ENCODE measurements at regions of chr11 and their contacts with region 1.

Region 1: GRCh38 chr11:18634140-18635032 is at the start of gene SPTY2D1:
- DNase-seq: peak; percentile 100
- H3K4me3 ChIP-seq: peak within 1 kb of the TSS; percentile 76 to 91 (median 84)
- H3K27ac ChIP-seq: peak within 1 kb of the TSS; percentile 90 to 95 (median 93)
- H3K4me1 ChIP-seq: peaks cover 10 to 44% (median 35%) of the 10 kb centered on the region in 4 donors
- H3K27me3 ChIP-seq: no peaks in the 10 kb centered on the region
- CTCF ChIP-seq: peak in 2 of 3 experiments; percentile 10 to 13
- EP300 ChIP-seq: no peak
- POLR2A ChIP-seq: peak; percentile 82
- total RNA-seq, gene SPTY2D1: 9.6 to 32.1 (median 18.1) TPM

Region 2: GRCh38 chr11:18304745-18305144 is 329.6 kb before region 1 on chr11:
- intact Hi-C with region 1: no loop called
- DNase-seq: no peak
- H3K4me3 ChIP-seq: no peak overlapping the region
- H3K27ac ChIP-seq: no peak overlapping the region
- H3K4me1 ChIP-seq: no peaks in the 10 kb centered on the region
- H3K27me3 ChIP-seq: no peaks in the 10 kb centered on the region
- CTCF ChIP-seq: no peak
- EP300 ChIP-seq: no peak
- POLR2A ChIP-seq: no peak

Region 3: DNA sequence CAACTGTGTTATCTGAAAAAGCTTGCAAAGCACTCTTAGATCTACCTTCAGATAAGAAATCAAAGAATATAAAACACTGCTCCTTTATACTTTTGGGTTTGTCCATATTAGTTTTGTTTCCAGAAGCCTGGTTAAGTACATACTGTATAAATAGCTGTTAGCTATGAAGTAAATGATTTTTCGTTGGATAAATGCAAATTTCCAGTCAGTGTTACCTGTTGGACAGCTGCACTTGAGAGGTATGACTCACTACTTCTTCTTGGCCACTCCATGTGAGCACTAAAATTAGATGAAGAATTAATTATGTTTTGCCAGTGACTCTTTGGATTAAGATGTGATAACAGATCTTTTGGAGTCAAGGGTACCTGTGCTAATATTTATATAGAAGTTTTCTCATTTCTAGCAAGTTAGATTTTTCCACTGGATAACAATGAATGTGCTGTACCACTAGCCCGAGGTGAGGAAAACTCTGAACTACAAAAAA is 98.2 kb before region 1 on chr11:
- intact Hi-C with region 1: loop called (anchors 10 kb)
- DNase-seq: no peak
- H3K4me3 ChIP-seq: no peak overlapping the region
- H3K27ac ChIP-seq: no peak overlapping the region
- H3K4me1 ChIP-seq: no peaks in the 10 kb centered on the region
- H3K27me3 ChIP-seq: no peaks in the 10 kb centered on the region
- CTCF ChIP-seq: no peak
- EP300 ChIP-seq: no peak
- POLR2A ChIP-seq: no peak

Region 4: DNA sequence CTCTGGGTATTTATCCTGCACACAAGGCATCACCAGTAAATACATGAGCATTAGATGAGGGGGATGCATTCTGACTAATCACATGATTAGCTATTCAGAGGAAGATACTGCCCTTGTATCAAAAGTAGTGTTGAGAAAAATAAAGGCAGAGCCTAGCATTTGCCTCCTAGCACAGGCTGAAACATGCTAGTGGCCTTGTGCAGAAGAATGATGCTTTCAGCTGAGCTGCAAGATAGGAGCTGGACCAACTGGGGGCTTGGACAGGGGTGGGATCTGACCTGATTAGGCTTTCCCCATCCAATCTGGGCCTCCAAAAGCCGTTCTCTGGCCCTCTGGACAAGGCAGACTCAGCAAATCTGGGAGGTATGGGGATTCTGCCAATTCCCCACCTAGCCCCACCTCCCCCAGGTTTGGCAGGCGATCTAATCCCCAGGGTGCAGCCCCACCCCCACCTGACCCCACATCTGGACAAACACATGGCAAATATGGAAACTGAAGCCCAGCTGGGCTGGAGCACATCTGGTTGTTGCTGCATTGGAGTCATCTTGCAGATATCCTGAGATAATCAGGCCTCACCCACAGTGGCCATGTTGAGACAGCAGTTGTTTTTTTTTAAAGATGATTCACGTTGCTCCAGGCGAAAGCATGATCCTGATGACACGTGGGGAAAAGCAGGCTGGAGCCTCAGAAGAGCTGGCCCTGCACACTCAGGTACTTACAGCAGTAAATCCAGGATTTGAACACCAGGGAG is 39.2 kb before region 1 on chr11:
- intact Hi-C with region 1: loop called (anchors 5 kb)
- DNase-seq: no peak
- H3K4me3 ChIP-seq: no peak overlapping the region
- H3K27ac ChIP-seq: no peak overlapping the region
- H3K4me1 ChIP-seq: peaks cover 8 to 31% (median 25%) of the 10 kb centered on the region in 4 donors
- H3K27me3 ChIP-seq: no peaks in the 10 kb centered on the region
- CTCF ChIP-seq: no peak
- EP300 ChIP-seq: no peak
- POLR2A ChIP-seq: no peak

Region 5: DNA sequence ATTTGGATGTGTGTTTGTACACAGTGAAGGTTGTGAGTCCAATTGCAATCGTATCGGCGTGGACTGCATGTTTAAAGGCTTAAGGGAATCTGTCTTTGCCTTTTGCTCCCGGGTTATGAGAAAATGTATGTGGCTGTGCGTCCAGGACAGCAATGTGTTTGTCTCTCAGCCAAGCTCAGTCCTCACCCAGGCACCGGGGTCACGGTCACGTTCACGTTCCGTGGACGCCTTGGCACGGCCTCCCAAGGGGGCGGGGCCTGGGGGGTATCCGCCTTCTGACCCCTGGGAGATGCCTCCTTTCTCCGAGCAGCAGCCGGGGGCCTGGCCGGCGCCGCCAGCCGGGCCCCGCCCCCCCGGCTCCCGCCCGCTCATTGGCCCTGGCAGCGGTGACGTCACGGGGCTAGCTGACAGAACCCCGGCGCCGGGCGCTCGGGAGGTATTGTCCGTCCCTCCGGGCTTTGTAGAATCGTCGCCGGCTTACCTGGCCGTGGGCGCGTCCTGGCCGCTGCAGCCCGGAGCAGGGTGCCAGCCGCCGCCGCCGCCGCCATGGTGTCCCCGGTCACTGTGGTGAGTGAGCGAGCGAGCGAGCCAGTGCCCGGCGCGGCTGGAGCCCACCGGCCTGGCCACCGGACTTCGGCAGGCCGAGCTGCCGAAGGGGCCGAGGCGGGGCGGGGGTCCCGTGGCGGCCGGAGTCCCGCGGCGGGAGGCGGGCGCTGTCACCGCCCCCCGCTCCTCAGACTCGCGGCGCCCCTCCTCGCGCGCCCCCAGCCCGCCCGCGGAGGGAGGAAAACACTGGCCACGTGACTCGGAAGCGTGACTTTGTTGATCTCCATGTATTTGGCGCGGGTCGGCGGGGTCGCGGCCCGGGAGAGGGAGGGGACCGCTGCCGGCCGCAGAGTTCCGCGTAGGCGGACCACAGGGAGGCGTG is 64.2 kb after region 1 on chr11 and contains the start of gene TMEM86A:
- intact Hi-C with region 1: loop called (anchors 5 kb)
- DNase-seq: peak; percentile 98
- H3K4me3 ChIP-seq: peak within 1 kb of the TSS; percentile 90 to 98 (median 95)
- H3K27ac ChIP-seq: peak within 1 kb of the TSS; percentile 85 to 88 (median 86)
- H3K4me1 ChIP-seq: peaks cover 17 to 29% (median 23%) of the 10 kb centered on the region in 4 donors
- H3K27me3 ChIP-seq: no peaks in the 10 kb centered on the region
- CTCF ChIP-seq: no peak
- EP300 ChIP-seq: no peak
- POLR2A ChIP-seq: peak; percentile 29
- total RNA-seq, gene TMEM86A: 2.5 to 5.5 (median 4.2) TPM

Region 6: DNA sequence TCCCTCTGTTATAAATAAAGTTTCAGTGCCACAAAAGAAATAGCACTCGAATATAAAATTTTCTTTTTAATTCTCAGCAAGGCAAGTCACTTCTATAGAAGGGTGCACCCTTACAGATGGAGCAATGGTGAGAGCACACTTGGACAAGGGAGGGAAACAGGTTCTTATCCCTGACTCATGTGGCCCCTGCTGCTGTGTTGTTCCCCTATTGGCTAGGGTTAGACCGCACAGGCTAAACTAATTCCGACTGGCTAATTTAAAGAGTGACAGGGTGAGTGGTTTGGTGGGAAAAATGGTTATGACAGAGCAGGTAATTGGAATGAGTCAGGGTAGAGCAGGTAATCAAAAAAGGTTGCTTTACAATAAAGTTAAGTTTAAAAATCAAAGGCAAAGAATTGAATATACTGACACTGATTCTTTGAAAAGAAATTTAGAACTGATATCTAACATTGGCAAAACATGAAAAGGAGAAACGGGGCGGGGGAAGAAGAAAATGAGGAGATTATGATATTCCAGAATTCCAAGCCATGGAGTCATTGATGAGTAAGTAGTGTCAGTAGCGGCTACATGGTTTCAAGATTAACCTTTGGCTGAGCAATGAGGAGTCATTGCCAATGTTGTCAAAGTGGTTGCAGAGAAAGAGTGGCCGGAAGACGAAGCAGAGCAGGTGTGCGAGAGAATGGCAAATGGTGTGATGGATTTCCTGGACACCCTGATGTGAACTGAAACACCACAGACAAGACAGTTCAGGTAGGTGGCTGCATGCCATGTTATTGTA is 353.3 kb after region 1 on chr11:
- intact Hi-C with region 1: no loop called
- DNase-seq: no peak
- H3K4me3 ChIP-seq: no peak overlapping the region
- H3K27ac ChIP-seq: no peak overlapping the region
- H3K4me1 ChIP-seq: no peaks in the 10 kb centered on the region
- H3K27me3 ChIP-seq: no peaks in the 10 kb centered on the region
- CTCF ChIP-seq: no peak
- EP300 ChIP-seq: no peak
- POLR2A ChIP-seq: no peak

Measured in esophagus muscularis mucosa (tissue), 4 donors.